ENCODE measurements at regions of chr1 and their contacts with region 1.

Region 1: DNA sequence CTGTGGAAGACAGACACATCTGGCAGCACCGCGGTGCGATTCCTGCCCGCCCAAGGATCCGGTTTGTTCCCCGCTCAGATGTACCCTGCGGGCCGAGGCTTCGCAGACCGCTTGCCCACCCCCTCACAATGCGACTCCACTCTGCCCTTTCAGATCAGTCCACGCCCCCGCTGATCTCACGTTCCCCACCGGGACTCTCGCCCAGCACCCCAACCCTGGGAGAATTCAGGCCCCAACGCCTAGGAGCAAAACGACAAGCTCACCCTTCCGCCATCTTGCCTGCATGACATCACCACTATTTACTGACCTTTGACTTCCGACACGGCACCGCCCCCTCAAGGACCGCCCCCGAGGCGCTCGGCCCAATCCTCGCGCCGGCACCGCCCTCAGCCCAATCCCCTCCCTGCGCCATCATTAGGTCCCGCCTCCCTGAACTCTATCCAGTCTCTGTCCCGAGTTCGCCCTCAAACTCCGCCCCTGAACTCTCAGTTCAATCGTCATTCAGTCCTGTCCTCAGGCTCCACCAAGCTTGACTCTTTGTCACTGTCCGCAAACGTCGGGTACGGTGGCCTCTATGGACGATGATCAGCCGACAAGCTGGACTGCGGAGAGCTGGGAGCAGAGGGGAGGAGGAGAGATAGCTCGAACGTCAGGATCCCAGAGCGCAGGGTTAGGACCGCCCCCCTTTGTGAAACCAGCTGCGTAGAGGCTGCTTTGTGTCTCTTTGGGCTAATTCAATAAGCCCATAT is at the start of gene BSDC1:
- DNase-seq: peak; percentile 95 to 99 (median 98)
- ATAC-seq: peak; percentile 95 to 96
- H3K4me3 Mint-ChIP-seq: peak within 1 kb of the TSS; percentile 91 to 100 (median 100)
- H3K27ac Mint-ChIP-seq: peak within 1 kb of the TSS; percentile 98 to 100 (median 100)
- H3K4me1 Mint-ChIP-seq: peaks cover 15 to 32% (median 30%) of the 10 kb centered on the region in 4 donors
- H3K27me3 Mint-ChIP-seq: no peaks in the 10 kb centered on the region
- polyA plus RNA-seq, gene BSDC1: 29.5 to 39.6 (median 31.1) TPM

Region 2: DNA sequence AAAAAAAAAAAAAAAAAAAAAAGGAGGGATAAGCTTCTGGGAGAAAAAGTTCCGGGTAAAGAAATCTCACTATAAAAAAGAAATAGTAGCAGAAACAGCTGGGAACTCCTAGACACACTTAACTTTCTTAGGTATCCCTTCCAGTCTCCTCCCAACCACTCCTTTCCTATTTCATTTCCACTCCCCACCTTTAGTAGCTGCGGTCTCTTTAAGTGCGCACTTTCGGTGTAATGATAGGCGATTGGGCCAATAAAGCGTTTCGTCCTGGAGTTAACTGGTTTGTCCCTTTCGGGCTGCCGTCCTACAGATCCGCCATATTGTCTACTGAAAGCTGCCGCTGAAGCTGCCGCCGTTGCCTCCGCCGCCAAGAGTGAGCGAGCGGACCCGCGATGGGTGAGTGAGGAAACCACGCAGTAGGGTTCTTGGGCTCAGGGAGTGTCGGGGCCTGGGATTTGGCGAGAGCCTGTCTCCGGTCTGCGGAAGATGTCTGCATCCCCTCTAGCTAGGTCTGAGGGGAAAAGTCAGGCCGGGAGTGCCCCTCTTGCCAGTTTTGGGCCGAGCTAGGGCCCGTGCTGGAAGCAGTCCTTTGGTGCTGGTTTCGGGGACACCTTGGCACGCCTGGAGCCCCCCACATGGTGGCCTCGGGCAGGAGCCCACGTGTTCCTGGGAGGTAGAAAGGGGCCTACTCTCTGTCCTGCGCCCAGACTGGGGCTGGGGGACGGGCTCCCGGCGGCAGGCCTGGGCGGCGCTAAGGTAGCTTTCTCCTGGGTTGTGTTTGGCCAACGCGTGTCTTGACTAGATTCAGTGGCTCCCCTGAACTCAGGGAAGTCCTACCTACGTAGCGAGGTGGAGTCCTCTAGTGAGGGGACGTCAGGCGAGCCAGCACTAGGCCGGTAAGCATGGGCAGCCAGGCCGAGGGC is 286.3 kb before region 1 on chr1 and contains the start of gene KPNA6:
- POLR2A ChIA-PET with region 1: interaction called, 11 read pairs
- DNase-seq: peak; percentile 76 to 97 (median 92)
- ATAC-seq: peak; percentile 82 to 87
- H3K4me3 Mint-ChIP-seq: peak within 1 kb of the TSS; percentile 96 to 100 (median 100)
- H3K27ac Mint-ChIP-seq: peak within 1 kb of the TSS; percentile 95 to 99 (median 99)
- H3K4me1 Mint-ChIP-seq: peaks cover 14 to 53% (median 44%) of the 10 kb centered on the region in 4 donors
- H3K27me3 Mint-ChIP-seq: no peaks in the 10 kb centered on the region
- polyA plus RNA-seq, gene KPNA6: 26.5 to 31.9 (median 28.3) TPM

Region 3: GRCh38 chr1:32240140-32240951 is 154.0 kb before region 1 on chr1:
- POLR2A ChIA-PET with region 1: interaction called, 11 read pairs
- DNase-seq: peak; percentile 57 to 84 (median 64)
- ATAC-seq: peak; percentile 81
- H3K4me3 Mint-ChIP-seq: peak overlapping the region; percentile 88 to 93 (median 90)
- H3K27ac Mint-ChIP-seq: peak overlapping the region; percentile 69 to 91 (median 84)
- H3K4me1 Mint-ChIP-seq: peaks cover 7 to 21% (median 20%) of the 10 kb centered on the region in 4 donors
- H3K27me3 Mint-ChIP-seq: no peaks in the 10 kb centered on the region

Region 4: DNA sequence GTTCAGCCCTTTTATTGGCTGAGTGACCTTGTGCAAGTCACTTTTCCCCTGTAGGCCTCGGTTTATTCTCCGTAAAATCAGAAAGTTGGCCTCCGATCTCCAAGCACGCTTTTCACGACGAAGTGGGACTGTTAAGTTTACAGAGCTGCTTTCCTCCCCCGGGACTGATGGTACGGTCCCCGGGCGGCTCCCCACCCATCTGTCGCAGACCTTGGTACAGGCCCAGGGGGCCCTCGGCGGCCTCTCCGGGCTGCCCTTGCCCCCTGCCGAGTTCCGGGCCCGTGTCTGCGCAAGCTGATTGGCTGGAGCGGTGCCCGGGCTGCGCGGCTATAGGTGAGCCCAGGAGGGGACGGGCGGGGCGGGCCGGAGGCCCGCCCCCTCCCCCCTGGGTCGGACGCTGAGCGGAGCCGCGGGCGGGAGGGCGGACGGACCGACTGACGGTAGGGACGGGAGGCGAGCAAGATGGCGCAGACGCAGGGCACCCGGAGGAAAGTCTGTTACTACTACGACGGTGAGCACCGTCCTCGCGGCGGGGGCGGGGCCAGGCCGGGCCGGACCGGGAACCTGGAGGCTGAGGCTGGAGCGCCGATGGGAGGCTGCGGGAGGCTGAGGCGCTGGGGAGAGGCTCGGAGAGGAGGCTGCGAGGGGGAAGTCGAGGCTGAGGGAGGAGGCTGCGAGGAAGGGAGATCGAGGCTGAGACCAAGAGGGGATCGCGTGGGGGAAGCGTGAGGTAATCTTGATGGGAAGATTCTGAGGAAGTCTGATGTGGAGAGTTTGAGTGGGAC is 102.4 kb before region 1 on chr1 and contains the start of gene HDAC1:
- POLR2A ChIA-PET with region 1: interaction called, 13 read pairs
- DNase-seq: peak; percentile 92 to 98 (median 96)
- ATAC-seq: peak; percentile 95
- H3K4me3 Mint-ChIP-seq: peak within 1 kb of the TSS; percentile 93 to 100 (median 99)
- H3K27ac Mint-ChIP-seq: peak within 1 kb of the TSS; percentile 95 to 99 (median 96)
- H3K4me1 Mint-ChIP-seq: peaks cover 24 to 61% (median 51%) of the 10 kb centered on the region in 4 donors
- H3K27me3 Mint-ChIP-seq: no peaks in the 10 kb centered on the region
- polyA plus RNA-seq, gene HDAC1: 171 to 202 (median 173) TPM

Measured in naive thymus-derived CD8-positive, alpha-beta T cell (primary cell).